Heart right ventricle (tissue), 16 donors: ENCODE measurements at regions of chr14 and their contacts with region 1.

Region 1: GRCh38 chr14:49915085-49915484 is 22.2 kb downstream of the ARF6 start:
- DNase-seq: no peak
- ATAC-seq: no peak
- H3K4me3 ChIP-seq: no peak overlapping the region
- H3K27ac ChIP-seq: no peak overlapping the region
- H3K4me1 ChIP-seq: peaks cover 0 to 18% (median 3%) of the 10 kb centered on the region in 9 donors
- H3K27me3 ChIP-seq: no peaks in the 10 kb centered on the region
- CTCF ChIP-seq: no peak

Region 2: DNA sequence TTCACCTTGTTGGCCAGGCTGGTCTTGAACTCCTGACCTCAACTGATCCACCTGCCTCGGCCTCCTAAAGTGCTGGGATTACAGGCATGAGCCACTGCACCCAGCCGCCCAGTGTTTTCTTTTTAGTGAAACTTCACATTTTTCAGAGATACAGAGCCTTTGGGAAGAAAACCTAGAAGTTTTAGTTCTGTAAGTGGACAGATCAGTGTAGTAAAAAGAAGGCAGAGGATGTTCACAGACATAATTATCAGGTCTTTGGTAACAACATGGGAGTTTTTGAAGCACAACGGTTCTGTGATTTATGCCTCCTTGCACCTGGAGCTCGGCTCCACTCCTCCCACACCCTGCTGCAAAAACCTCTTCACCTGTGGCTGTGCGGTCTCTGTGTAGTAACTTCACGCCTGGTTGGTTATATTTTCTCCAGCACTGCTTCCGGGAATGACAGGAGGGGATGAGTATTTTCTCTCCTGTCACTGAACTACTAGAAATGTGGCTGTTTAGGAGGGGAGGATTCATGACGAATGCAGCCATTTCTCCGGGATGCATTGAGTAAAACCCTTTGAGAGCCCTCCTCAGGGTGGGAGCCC is 44.8 kb after region 1 on chr14:
- intact Hi-C with region 1: loop called in 1 of 10 experiments (anchors 10 kb)
- DNase-seq: no peak
- ATAC-seq: no peak
- H3K4me3 ChIP-seq: no peak overlapping the region
- H3K27ac ChIP-seq: no peak overlapping the region
- H3K4me1 ChIP-seq: peaks cover 0 to 4% (median 0%) of the 10 kb centered on the region in 9 donors
- H3K27me3 ChIP-seq: no peaks in the 10 kb centered on the region
- CTCF ChIP-seq: no peak